Activated CD4-positive, alpha-beta T cell treated with anti-CD3 and anti-CD28 coated beads for 36 hours (primary cell): ENCODE measurements at regions of chr7 and their contacts with region 1.

Region 1: DNA sequence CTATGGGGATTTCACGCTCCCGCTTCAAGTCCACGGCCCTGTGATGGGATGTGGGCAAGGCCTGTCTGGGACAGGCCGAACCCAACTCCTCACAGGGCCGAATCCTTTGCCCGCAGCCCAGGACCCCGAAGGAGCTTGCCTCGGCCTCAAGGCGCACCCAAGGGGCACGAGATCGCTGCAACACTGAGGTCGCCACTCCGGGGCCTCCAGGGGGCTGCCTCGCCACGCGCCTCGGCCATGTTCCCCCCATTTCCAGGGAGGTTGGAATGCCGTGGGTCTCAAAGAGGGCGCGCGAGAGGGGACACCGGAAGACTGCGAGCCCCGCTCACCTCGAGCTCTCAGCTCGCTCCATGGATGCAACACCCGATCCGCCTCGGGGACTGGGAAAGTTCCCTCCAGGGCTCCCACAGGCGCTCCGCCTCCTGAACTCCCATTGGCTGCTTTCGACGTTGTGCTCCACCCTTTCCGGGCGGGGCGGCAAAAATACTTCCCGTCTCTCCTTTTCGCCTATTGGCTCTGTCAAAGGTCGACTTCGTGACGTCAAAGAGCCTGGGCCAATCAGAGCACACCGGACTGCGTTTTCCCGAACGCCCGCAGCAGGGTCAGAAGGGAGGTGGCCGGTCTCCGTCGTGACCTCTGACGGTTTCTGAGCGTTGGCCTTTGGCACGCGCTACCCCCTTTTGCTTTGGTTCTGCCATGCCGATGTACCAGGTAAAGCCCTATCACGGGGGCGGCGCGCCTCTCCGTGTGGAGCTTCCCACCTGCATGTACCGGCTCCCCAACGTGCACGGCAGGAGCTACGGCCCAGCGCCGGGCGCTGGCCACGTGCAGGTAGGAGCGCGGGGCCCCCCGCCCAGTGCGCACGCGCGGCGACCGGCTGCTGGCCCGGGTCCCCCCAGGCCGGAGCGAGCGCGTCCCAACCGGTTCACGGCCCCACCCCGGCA is at the starts of genes AIMP2 and PMS2:
- DNase-seq: peak; percentile 98
- ATAC-seq: peak; percentile 90
- H3K4me3 Mint-ChIP-seq: peak within 1 kb of the TSS; percentile 88
- H3K27ac Mint-ChIP-seq: peak within 1 kb of the TSS; percentile 91
- H3K4me1 Mint-ChIP-seq: peaks cover 42% of the 10 kb centered on the region
- H3K27me3 Mint-ChIP-seq: no peaks in the 10 kb centered on the region
- total RNA-seq, gene AIMP2: 50.1 to 56.0 TPM
- total RNA-seq, gene PMS2: 26.9 to 29.0 TPM

Region 2: GRCh38 chr7:5780801-5781496 is 228.0 kb before region 1 on chr7:
- CTCF ChIA-PET with region 1: no interaction called
- POLR2A ChIA-PET with region 1: no interaction called
- intact Hi-C with region 1: loop called in 1 of 2 experiments (anchors 2 kb)
- DNase-seq: peak; percentile 61
- ATAC-seq: peak; percentile 19
- H3K4me3 Mint-ChIP-seq: peak overlapping the region; percentile 78
- H3K27ac Mint-ChIP-seq: peak overlapping the region; percentile 80
- H3K4me1 Mint-ChIP-seq: peaks cover 45% of the 10 kb centered on the region
- H3K27me3 Mint-ChIP-seq: no peaks in the 10 kb centered on the region

Region 3: GRCh38 chr7:5822742-5823503 is 186.0 kb before region 1 on chr7:
- CTCF ChIA-PET with region 1: no interaction called
- POLR2A ChIA-PET with region 1: no interaction called
- intact Hi-C with region 1: loop called in 1 of 2 experiments (anchors 1 kb)
- DNase-seq: peak; percentile 99
- ATAC-seq: peak; percentile 94
- H3K4me3 Mint-ChIP-seq: peak overlapping the region; percentile 74
- H3K27ac Mint-ChIP-seq: peak overlapping the region; percentile 89
- H3K4me1 Mint-ChIP-seq: peaks cover 29% of the 10 kb centered on the region
- H3K27me3 Mint-ChIP-seq: no peaks in the 10 kb centered on the region

Region 4: DNA sequence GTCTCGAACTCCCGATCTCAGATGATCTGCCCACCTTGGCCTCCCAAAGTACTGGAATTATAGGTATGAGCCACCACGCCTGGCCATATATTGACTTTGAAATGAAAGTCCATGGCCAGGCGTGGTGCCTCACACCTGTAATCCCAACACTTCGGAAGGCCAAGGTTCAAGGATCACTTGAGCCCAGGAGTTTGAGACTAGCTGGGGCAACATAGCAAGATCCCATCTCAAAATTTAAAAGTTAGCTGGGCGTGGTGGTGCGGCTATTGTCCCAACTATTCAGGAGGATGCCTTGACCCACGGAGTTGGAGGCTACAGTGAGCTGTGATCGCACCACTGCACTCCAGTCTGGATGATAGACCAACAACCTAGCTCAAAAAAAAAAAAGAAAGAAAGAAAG is 116.4 kb before region 1 on chr7:
- CTCF ChIA-PET with region 1: no interaction called
- POLR2A ChIA-PET with region 1: no interaction called
- intact Hi-C with region 1: loop called in 1 of 2 experiments (anchors 5 kb)
- DNase-seq: no peak
- ATAC-seq: no peak
- H3K4me3 Mint-ChIP-seq: no peak overlapping the region
- H3K27ac Mint-ChIP-seq: no peak overlapping the region
- H3K4me1 Mint-ChIP-seq: no peaks in the 10 kb centered on the region
- H3K27me3 Mint-ChIP-seq: no peaks in the 10 kb centered on the region

Region 5: GRCh38 chr7:6435486-6436384 is 426.8 kb after region 1 on chr7:
- CTCF ChIA-PET with region 1: no interaction called
- POLR2A ChIA-PET with region 1: no interaction called
- intact Hi-C with region 1: loop called in 1 of 2 experiments (anchors 2 kb)
- DNase-seq: peak; percentile 94
- ATAC-seq: peak; percentile 85
- H3K4me3 Mint-ChIP-seq: peak overlapping the region; percentile 52
- H3K27ac Mint-ChIP-seq: peak overlapping the region; percentile 80
- H3K4me1 Mint-ChIP-seq: peaks cover 39% of the 10 kb centered on the region
- H3K27me3 Mint-ChIP-seq: no peaks in the 10 kb centered on the region